GM12878 (cell line): ENCODE measurements at regions of chr7 and their contacts with region 1.

Region 1: DNA sequence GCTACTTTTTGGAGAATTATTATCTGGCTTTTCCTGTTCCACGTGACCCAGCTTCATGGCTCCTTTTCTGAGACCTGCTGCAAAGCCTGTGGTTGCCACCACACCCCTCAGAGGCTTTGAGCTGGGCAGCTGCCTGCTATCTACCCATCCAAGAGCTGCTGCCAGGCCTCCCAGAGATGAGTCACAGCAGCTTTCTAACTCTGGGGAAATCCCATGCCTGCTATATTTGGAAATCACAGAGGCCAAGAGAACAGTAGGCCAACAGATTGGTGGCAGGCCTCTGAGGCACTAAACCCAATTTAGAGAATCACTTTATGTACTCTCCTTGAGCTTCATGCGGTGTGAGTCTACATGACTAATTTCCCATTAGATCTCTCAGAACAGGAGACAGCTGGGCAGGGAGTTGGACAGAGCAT is 35.2 kb downstream of the SGCE start:
- DNase-seq: peak; percentile 89
- ATAC-seq: peak; percentile 99
- H3K4me3 ChIP-seq: peak overlapping the region; percentile 40; the same call in 1 of the 2 replicates
- H3K27ac ChIP-seq: peak overlapping the region; percentile 47
- H3K4me1 ChIP-seq: peaks cover 8% of the 10 kb centered on the region
- H3K27me3 ChIP-seq: no peaks in the 10 kb centered on the region
- CTCF ChIP-seq: no peak
- EP300 ChIP-seq: 0 out of 4 replicates have a peak, but pooled peaks of 1 of the 2 experiments have one; percentile 41
- POLR2A ChIP-seq: no peak
- RAD21 ChIP-seq: peak; percentile 22; the same call in 1 of the 2 replicates

Region 2: GRCh38 chr7:94609561-94609960 is 11.2 kb before region 1 on chr7:
- CTCF ChIA-PET with region 1: interaction called, 4 read pairs
- POLR2A ChIA-PET with region 1: no interaction called
- RAD21 ChIA-PET with region 1: no interaction called
- SMC1A ChIA-PET with region 1: interaction called, 10 read pairs
- in situ Hi-C with region 1: no loop called
- intact Hi-C with region 1: no loop called
- DNase-seq: no peak
- ATAC-seq: no peak
- H3K4me3 ChIP-seq: no peak overlapping the region
- H3K27ac ChIP-seq: no peak overlapping the region
- H3K4me1 ChIP-seq: no peaks in the 10 kb centered on the region
- H3K27me3 ChIP-seq: no peaks in the 10 kb centered on the region
- CTCF ChIP-seq: no peak
- EP300 ChIP-seq: no peak
- POLR2A ChIP-seq: no peak
- RAD21 ChIP-seq: no peak

Region 3: DNA sequence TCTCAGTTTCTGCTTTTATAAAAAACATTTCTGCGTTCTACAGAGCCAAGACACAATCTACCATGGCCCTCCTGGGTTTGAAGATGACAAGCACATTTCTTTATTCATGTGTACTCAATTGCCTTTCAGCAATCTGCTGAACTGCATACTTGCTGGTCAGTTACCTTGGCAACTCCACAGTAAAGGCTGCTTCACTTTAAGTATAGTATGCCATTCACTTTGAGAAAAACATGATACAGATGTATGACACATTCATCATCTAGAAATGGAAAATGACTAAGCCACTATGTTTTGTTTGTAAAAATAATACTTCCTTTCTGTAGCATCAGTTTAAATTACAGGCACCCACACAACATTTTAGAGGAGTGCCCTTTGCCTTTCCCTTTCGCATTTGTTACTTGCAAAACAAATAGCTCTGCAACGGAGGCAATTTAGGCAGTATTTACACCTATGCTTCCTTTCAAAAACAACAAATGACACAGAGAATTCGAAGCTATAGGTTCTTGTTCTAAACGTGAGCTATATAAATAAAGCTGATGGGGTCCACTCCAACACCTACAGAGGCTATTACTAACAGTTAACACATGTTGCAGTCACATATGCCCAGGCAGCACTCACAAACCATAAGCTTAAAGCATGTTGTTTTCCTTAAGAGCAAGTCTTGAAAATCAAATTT is 11.8 kb after region 1 on chr7:
- CTCF ChIA-PET with region 1: interaction called, 10 read pairs
- POLR2A ChIA-PET with region 1: interaction called, 5 read pairs
- RAD21 ChIA-PET with region 1: interaction called, 10 read pairs
- SMC1A ChIA-PET with region 1: interaction called, 15 read pairs
- in situ Hi-C with region 1: no loop called
- intact Hi-C with region 1: no loop called
- DNase-seq: no peak
- ATAC-seq: peak; percentile 84
- H3K4me3 ChIP-seq: no peak overlapping the region
- H3K27ac ChIP-seq: no peak overlapping the region
- H3K4me1 ChIP-seq: no peaks in the 10 kb centered on the region
- H3K27me3 ChIP-seq: no peaks in the 10 kb centered on the region
- CTCF ChIP-seq: no peak
- EP300 ChIP-seq: no peak
- POLR2A ChIP-seq: no peak
- RAD21 ChIP-seq: no peak

Region 4: DNA sequence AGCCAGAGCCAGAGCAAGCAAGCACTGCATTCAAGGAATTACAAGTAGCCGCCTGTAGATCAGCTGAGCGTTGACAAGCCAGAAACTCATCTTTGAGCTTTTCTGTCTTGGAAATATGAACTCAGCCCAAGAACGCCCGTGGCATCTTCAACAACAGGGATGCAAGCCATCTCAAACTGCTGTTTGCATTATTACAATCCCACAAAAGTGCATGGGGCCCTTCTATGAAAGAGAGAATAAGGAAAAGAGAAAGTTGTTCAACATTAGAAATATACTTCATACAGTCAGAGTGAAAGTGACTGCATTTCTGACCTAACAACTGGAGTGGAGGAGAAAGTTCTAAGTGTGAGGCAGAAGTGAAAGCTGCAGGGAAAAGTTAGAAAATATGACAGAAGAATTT is 28.7 kb after region 1 on chr7:
- CTCF ChIA-PET with region 1: no interaction called
- POLR2A ChIA-PET with region 1: interaction called, 4 read pairs
- RAD21 ChIA-PET with region 1: interaction called, 10 read pairs
- SMC1A ChIA-PET with region 1: interaction called, 18 read pairs
- in situ Hi-C with region 1: no loop called
- intact Hi-C with region 1: loop called (anchors 2 kb)
- DNase-seq: no peak
- ATAC-seq: peak; percentile 85
- H3K4me3 ChIP-seq: peak overlapping the region; percentile 18; the same call in 1 of the 2 replicates
- H3K27ac ChIP-seq: no peak overlapping the region
- H3K4me1 ChIP-seq: peaks cover 2% of the 10 kb centered on the region; the same call in 1 of the 2 replicates
- H3K27me3 ChIP-seq: no peaks in the 10 kb centered on the region
- CTCF ChIP-seq: no peak
- EP300 ChIP-seq: no peak
- POLR2A ChIP-seq: no peak
- RAD21 ChIP-seq: no peak

Region 5: GRCh38 chr7:94657771-94658693 is 37.3 kb after region 1 on chr7:
- CTCF ChIA-PET with region 1: interaction called, 4 read pairs
- POLR2A ChIA-PET with region 1: no interaction called
- RAD21 ChIA-PET with region 1: interaction called, 10 read pairs
- SMC1A ChIA-PET with region 1: interaction called, 6 read pairs
- in situ Hi-C with region 1: no loop called
- intact Hi-C with region 1: loop called (anchors 2 kb)
- DNase-seq: peak; percentile 83
- ATAC-seq: peak; percentile 88
- H3K4me3 ChIP-seq: no peak overlapping the region
- H3K27ac ChIP-seq: no peak overlapping the region
- H3K4me1 ChIP-seq: no peaks in the 10 kb centered on the region; the same call in 1 of the 2 replicates
- H3K27me3 ChIP-seq: no peaks in the 10 kb centered on the region
- CTCF ChIP-seq: peak in 1 of 3 experiments; percentile 16; a peak in 1 of 6 replicates
- EP300 ChIP-seq: no peak
- POLR2A ChIP-seq: peak; percentile 56; the same call in 1 of the 2 replicates
- RAD21 ChIP-seq: no peak